Endothelial cell of umbilical vein (primary cell): ENCODE measurements at regions of chr20 and their contacts with region 1.

Region 1: DNA sequence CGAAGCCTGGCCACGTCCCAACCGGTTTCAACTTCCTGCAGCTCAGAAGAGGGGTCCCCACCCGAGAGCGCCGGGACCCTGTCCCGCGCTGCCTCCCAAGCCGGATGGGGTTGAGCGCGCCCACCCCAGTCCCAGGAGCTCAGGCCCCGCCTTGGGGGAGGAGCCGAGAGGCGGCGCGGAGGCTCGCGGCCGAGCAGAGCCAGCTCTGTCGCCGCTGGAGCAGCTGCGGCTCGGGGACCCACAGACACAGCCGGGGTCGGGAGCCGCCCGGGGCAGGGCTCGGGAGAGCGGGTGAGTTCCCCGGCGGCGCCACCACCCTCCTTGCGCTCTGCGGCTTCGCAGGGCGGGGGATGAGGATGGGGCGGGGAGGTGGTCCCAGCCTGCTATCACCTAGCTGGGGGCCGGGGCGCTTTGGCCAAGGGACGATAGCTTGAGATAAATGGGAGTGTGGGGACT is at the start of gene PPP1R16B:
- DNase-seq: peak; percentile 72
- H3K4me3 ChIP-seq: peak within 1 kb of the TSS; percentile 57 to 87 (median 72)
- H3K27ac ChIP-seq: peak within 1 kb of the TSS; percentile 88
- H3K4me1 ChIP-seq: peaks cover 33% of the 10 kb centered on the region
- H3K27me3 ChIP-seq: no peaks in the 10 kb centered on the region
- CTCF ChIP-seq: no peak
- POLR2A ChIP-seq: peak; percentile 82
- total RNA-seq, gene PPP1R16B: 52.7 and 68.1 TPM in 2 replicates

Region 2: DNA sequence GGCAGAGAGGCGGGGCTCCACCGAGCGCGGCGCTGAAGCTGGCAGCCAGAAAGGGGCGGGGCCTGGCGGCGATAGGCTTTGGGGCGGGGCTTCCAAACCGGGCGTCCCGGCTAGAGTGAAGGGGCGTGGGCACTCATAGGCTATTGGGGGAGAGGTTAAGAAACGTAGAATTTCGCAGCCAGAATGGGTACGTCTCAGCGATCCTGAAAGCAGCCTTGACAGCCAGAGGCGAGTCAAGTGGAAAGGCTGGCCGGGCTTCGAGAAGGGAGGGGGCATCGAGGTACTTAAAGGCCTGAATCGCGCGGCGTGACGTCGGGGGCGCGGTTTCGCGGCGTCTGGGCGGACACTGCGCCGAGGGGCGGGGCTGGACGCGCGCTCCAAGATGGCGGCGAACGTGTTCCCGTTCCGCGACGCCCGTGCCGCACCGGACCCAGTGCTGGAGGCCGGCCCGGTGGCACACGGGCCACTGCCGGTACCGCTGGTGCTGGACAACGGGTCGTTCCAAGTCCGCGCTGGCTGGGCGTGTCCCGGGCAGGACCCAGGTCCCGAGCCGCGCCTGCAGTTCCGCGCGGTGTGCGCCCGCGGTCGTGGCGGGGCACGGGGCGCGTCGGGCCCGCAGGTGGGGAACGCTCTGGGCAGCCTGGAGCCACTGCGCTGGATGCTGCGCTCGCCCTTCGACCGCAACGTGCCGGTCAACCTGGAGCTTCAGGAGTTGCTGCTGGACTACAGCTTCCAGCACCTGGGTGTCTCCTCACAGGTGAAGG is 57.3 kb before region 1 on chr20 and contains the start of gene ACTR5:
- CTCF ChIA-PET with region 1: no interaction called
- POLR2A ChIA-PET with region 1: interaction called, 3 read pairs
- dilution Hi-C with region 1: no loop called
- intact Hi-C with region 1: loop called (anchors 1 kb)
- DNase-seq: peak; percentile 94
- H3K4me3 ChIP-seq: peak within 1 kb of the TSS; percentile 26 to 86 (median 77)
- H3K27ac ChIP-seq: peak within 1 kb of the TSS; percentile 46
- H3K4me1 ChIP-seq: peaks cover 6% of the 10 kb centered on the region
- H3K27me3 ChIP-seq: no peaks in the 10 kb centered on the region
- CTCF ChIP-seq: no peak
- POLR2A ChIP-seq: peak; percentile 80
- total RNA-seq, gene ACTR5: 9.7 and 11.3 TPM in 2 replicates

Region 3: GRCh38 chr20:38757145-38757775 is 48.3 kb before region 1 on chr20:
- CTCF ChIA-PET with region 1: no interaction called
- POLR2A ChIA-PET with region 1: interaction called, 3 read pairs
- dilution Hi-C with region 1: no loop called
- intact Hi-C with region 1: loop called (anchors 1 kb)
- DNase-seq: peak; percentile 73
- H3K4me3 ChIP-seq: no peak overlapping the region
- H3K27ac ChIP-seq: peak overlapping the region; percentile 87
- H3K4me1 ChIP-seq: peaks cover 11% of the 10 kb centered on the region
- H3K27me3 ChIP-seq: no peaks in the 10 kb centered on the region
- CTCF ChIP-seq: no peak
- POLR2A ChIP-seq: no peak

Region 4: GRCh38 chr20:38776363-38776762 is 29.2 kb before region 1 on chr20:
- CTCF ChIA-PET with region 1: no interaction called
- POLR2A ChIA-PET with region 1: no interaction called
- dilution Hi-C with region 1: no loop called
- intact Hi-C with region 1: no loop called
- DNase-seq: no peak
- H3K4me3 ChIP-seq: no peak overlapping the region
- H3K27ac ChIP-seq: no peak overlapping the region
- H3K4me1 ChIP-seq: no peaks in the 10 kb centered on the region
- H3K27me3 ChIP-seq: no peaks in the 10 kb centered on the region
- CTCF ChIP-seq: no peak
- POLR2A ChIP-seq: no peak

Region 5: GRCh38 chr20:38790200-38791053 is 15.1 kb before region 1 on chr20:
- CTCF ChIA-PET with region 1: interaction called, 15 read pairs
- POLR2A ChIA-PET with region 1: no interaction called
- dilution Hi-C with region 1: no loop called
- intact Hi-C with region 1: no loop called
- DNase-seq: peak; percentile 66
- H3K4me3 ChIP-seq: no peak overlapping the region
- H3K27ac ChIP-seq: no peak overlapping the region
- H3K4me1 ChIP-seq: no peaks in the 10 kb centered on the region
- H3K27me3 ChIP-seq: peaks cover 0 to 5% of the 10 kb centered on the region in 2 experiments
- CTCF ChIP-seq: peak; percentile 59 to 66
- POLR2A ChIP-seq: no peak

Region 6: GRCh38 chr20:38825901-38826625 is 20.5 kb after region 1 on chr20:
- CTCF ChIA-PET with region 1: interaction called, 16 read pairs
- POLR2A ChIA-PET with region 1: interaction called, 9 read pairs
- dilution Hi-C with region 1: no loop called
- intact Hi-C with region 1: loop called (anchors 1 kb)
- DNase-seq: peak; percentile 86
- H3K4me3 ChIP-seq: no peak overlapping the region
- H3K27ac ChIP-seq: peak overlapping the region; percentile 99
- H3K4me1 ChIP-seq: peaks cover 61% of the 10 kb centered on the region
- H3K27me3 ChIP-seq: no peaks in the 10 kb centered on the region
- CTCF ChIP-seq: no peak
- POLR2A ChIP-seq: no peak

Region 7: DNA sequence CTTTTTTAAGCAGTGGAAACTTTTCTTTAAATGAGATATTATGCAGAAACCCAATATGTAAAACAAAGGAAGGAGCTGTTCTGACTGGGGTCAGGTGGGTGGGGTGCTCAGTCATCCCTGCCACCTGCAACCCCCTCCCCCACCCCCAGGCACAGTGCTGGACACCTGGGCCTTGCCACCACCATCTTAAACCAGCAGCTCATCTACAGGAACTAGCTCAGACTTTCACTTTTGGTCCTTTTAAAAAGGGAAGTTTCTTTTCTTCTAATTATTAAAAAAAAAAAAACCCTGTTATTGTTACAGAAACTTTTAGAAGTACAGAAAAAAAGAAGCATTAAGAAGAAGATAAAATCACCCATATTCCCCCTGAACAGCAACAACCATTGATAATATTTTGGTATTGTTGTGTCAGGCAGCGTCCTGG is 37.0 kb after region 1 on chr20:
- CTCF ChIA-PET with region 1: no interaction called
- POLR2A ChIA-PET with region 1: no interaction called
- dilution Hi-C with region 1: no loop called
- intact Hi-C with region 1: no loop called
- DNase-seq: peak; percentile 37
- H3K4me3 ChIP-seq: no peak overlapping the region
- H3K27ac ChIP-seq: no peak overlapping the region
- H3K4me1 ChIP-seq: peaks cover 10% of the 10 kb centered on the region
- H3K27me3 ChIP-seq: peaks cover 0 to 2% of the 10 kb centered on the region in 2 experiments
- CTCF ChIP-seq: no peak
- POLR2A ChIP-seq: no peak

Region 8: DNA sequence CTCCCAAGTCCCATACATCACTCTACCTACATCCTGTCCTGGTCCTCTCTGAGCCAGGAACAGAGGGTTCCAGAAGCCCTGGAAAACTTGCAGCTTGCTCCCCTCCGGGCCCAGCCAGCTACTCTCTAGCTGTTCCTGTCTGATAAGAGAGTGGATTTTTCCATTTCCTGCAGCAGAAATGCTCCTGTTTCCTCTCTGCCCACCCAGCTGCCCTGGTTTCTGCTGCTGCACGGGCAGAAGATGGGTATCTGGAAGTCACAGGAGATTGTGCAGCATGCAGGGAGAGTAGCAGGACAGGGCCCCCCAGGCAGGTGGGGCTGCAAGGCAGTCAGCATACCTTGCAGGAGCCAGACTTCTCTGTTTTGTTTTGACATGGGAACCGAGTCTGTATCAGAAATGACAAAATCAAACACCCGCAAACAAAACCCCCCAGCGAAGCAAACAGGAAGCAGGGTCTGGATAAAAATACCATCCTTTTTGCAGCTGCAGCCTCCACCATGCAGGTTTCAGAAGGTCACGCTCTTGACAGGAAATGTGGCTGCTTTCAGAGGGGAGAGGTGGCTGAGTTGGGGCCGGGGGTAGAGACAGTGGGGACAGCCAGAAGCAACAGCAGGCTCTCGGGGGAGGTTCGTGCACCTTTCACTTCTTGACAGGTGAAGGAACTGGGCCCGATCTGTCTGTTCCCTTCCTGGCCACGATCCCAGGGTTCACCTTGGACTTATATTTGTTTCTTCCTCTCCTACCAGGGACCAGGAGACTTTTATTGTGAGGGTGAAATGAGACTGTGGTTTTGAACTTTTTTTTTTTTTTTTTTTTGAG is 69.9 kb after region 1 on chr20:
- CTCF ChIA-PET with region 1: interaction called, 4 read pairs
- POLR2A ChIA-PET with region 1: interaction called, 9 read pairs
- dilution Hi-C with region 1: no loop called
- intact Hi-C with region 1: loop called (anchors 1 kb)
- DNase-seq: peak; percentile 92
- H3K4me3 ChIP-seq: no peak overlapping the region
- H3K27ac ChIP-seq: peak overlapping the region; percentile 54
- H3K4me1 ChIP-seq: peaks cover 36% of the 10 kb centered on the region
- H3K27me3 ChIP-seq: no peaks in the 10 kb centered on the region
- CTCF ChIP-seq: no peak
- POLR2A ChIP-seq: no peak

Region 9: DNA sequence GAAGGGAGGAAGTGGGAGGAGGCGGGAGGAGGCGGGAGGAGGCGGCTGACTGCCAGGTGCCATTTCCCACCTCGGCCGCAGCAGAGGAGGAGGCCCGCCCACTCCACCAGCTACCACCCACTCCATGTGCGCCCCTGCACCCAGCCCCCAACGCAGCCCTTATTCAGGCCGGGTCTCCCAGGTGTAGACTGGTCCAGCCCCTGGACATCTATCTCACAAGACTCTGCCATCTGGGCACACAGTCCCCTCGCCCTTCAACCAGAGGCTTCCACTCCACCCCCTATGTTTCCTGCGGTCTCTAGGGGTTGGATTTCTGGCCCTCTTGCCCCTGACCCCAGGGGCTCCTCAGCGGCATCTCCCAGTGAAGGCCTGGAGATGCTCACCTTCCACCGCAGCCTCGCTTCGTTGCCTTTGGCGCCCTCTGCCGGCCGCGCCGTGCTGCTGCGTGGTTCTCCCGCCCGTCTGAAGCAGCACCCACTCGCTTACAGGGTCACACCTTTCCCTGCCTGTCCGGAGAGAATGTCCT is 88.1 kb after region 1 on chr20:
- CTCF ChIA-PET with region 1: interaction called, 14 read pairs
- POLR2A ChIA-PET with region 1: no interaction called
- dilution Hi-C with region 1: no loop called
- intact Hi-C with region 1: loop called (anchors 1 kb)
- DNase-seq: peak; percentile 65
- H3K4me3 ChIP-seq: no peak overlapping the region
- H3K27ac ChIP-seq: no peak overlapping the region
- H3K4me1 ChIP-seq: peaks cover 5% of the 10 kb centered on the region
- H3K27me3 ChIP-seq: no peaks in the 10 kb centered on the region
- CTCF ChIP-seq: peak; percentile 86 to 99
- POLR2A ChIP-seq: no peak